ENCODE measurements at regions of chr1 and their contacts with region 1.

Region 1: GRCh38 chr1:37423810-37424209 is 50.6 kb upstream of the ZC3H12A start:
- DNase-seq: no peak
- ATAC-seq: no peak
- H3K4me3 Mint-ChIP-seq: no peak overlapping the region
- H3K27ac Mint-ChIP-seq: no peak overlapping the region
- H3K4me1 Mint-ChIP-seq: no peaks in the 10 kb centered on the region
- H3K27me3 Mint-ChIP-seq: peaks cover 10% of the 10 kb centered on the region

Region 2: GRCh38 chr1:37391211-37392011 is 32.4 kb before region 1 on chr1:
- CTCF ChIA-PET with region 1: no interaction called
- POLR2A ChIA-PET with region 1: no interaction called
- DNase-seq: no peak
- ATAC-seq: no peak
- H3K4me3 Mint-ChIP-seq: no peak overlapping the region
- H3K27ac Mint-ChIP-seq: no peak overlapping the region
- H3K4me1 Mint-ChIP-seq: no peaks in the 10 kb centered on the region
- H3K27me3 Mint-ChIP-seq: peaks cover 11% of the 10 kb centered on the region

Region 3: GRCh38 chr1:37410815-37411214 is 13.0 kb before region 1 on chr1:
- CTCF ChIA-PET with region 1: no interaction called
- POLR2A ChIA-PET with region 1: no interaction called
- DNase-seq: peak; percentile 44
- ATAC-seq: no peak
- H3K4me3 Mint-ChIP-seq: no peak overlapping the region
- H3K27ac Mint-ChIP-seq: no peak overlapping the region
- H3K4me1 Mint-ChIP-seq: no peaks in the 10 kb centered on the region
- H3K27me3 Mint-ChIP-seq: peaks cover 4% of the 10 kb centered on the region

Region 4: GRCh38 chr1:37434292-37434907 is 10.6 kb after region 1 on chr1:
- CTCF ChIA-PET with region 1: interaction called, 16 read pairs
- POLR2A ChIA-PET with region 1: no interaction called
- DNase-seq: peak; percentile 78
- ATAC-seq: peak; percentile 92
- H3K4me3 Mint-ChIP-seq: no peak overlapping the region
- H3K27ac Mint-ChIP-seq: no peak overlapping the region
- H3K4me1 Mint-ChIP-seq: no peaks in the 10 kb centered on the region
- H3K27me3 Mint-ChIP-seq: peaks cover 5% of the 10 kb centered on the region

Measured in activated CD8-positive, alpha-beta T cell treated with anti-CD3 and anti-CD28 coated beads, Interleukin-2, amount 10 ng/mL, durations not matched to agents 7 days and 5 days (primary cell).